CD4-positive, alpha-beta memory T cell (primary cell): ENCODE measurements at regions of chr6 and their contacts with region 1.

Region 1: GRCh38 chr6:27871924-27872638 is 40.1 kb downstream of the OR2B2 start:
- DNase-seq: peak; percentile 91 to 96 (median 94)
- H3K4me3 ChIP-seq: peak overlapping the region; percentile 77 to 89
- H3K4me3 Mint-ChIP-seq: peak overlapping the region; percentile 87 to 94 (median 90)
- H3K27ac ChIP-seq: peak overlapping the region; percentile 86
- H3K27ac Mint-ChIP-seq: peak overlapping the region; percentile 89 to 97 (median 94)
- H3K4me1 ChIP-seq: peaks cover 33% of the 10 kb centered on the region
- H3K4me1 Mint-ChIP-seq: peaks cover 24 to 48% (median 33%) of the 10 kb centered on the region in 4 donors
- H3K27me3 ChIP-seq: no peaks in the 10 kb centered on the region
- H3K27me3 Mint-ChIP-seq: no peaks in the 10 kb centered on the region

Region 2: GRCh38 chr6:26020329-26021000 is 1851.6 kb before region 1 on chr6:
- CTCF ChIA-PET with region 1: no interaction called
- POLR2A ChIA-PET with region 1: interaction called, 45 read pairs
- intact Hi-C with region 1: loop called (anchors 2 kb)
- DNase-seq: peak; percentile 85 to 92 (median 91)
- H3K4me3 ChIP-seq: peak overlapping the region; percentile 82 to 87
- H3K4me3 Mint-ChIP-seq: peak overlapping the region; percentile 92 to 98 (median 96)
- H3K27ac ChIP-seq: peak overlapping the region; percentile 96
- H3K27ac Mint-ChIP-seq: peak overlapping the region; percentile 96 to 100 (median 100)
- H3K4me1 ChIP-seq: peaks cover 29% of the 10 kb centered on the region
- H3K4me1 Mint-ChIP-seq: peaks cover 14 to 58% (median 32%) of the 10 kb centered on the region in 4 donors
- H3K27me3 ChIP-seq: no peaks in the 10 kb centered on the region
- H3K27me3 Mint-ChIP-seq: peaks cover 0 to 1% of the 10 kb centered on the region in 2 donors

Region 3: DNA sequence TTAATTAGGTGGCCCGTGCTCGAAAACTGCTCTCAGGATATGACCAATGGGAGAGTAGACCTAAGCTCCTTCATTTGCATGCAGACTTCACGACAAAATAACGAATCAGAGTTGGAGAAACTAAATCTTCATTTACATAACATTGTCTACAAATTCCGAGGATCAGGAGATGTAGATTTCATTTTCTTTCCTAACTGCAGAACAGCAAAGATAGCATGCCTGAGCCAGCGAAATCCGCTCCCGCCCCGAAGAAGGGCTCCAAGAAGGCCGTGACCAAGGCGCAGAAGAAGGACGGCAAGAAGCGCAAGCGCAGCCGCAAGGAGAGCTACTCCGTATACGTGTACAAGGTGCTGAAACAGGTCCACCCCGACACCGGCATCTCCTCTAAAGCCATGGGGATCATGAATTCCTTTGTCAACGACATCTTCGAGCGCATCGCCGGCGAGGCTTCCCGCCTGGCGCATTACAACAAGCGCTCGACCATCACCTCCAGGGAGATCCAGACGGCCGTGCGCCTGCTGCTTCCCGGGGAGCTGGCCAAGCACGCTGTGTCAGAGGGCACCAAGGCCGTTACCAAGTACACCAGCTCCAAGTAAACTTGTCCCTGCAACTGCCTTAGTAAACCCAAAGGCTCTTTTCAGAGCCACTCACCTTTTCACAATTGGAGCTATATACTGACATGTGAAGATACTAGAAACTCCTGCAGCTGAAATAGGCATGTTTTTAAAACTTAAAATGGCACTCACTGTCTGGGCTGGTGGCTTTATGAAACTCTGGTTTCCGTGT is 1688.3 kb before region 1 on chr6:
- CTCF ChIA-PET with region 1: no interaction called
- POLR2A ChIA-PET with region 1: interaction called, 10 read pairs
- intact Hi-C with region 1: no loop called
- DNase-seq: peak; percentile 72 to 81 (median 79)
- H3K4me3 ChIP-seq: peak overlapping the region; percentile 2 to 69
- H3K4me3 Mint-ChIP-seq: peak overlapping the region; percentile 90 to 100 (median 96)
- H3K27ac ChIP-seq: peak overlapping the region; percentile 67
- H3K27ac Mint-ChIP-seq: peak overlapping the region; percentile 78 to 99 (median 95)
- H3K4me1 ChIP-seq: peaks cover 45% of the 10 kb centered on the region
- H3K4me1 Mint-ChIP-seq: peaks cover 29 to 54% (median 37%) of the 10 kb centered on the region in 4 donors
- H3K27me3 ChIP-seq: no peaks in the 10 kb centered on the region
- H3K27me3 Mint-ChIP-seq: no peaks in the 10 kb centered on the region

Region 4: GRCh38 chr6:27138837-27139755 is 733.0 kb before region 1 on chr6:
- CTCF ChIA-PET with region 1: no interaction called
- POLR2A ChIA-PET with region 1: interaction called, 84 read pairs
- intact Hi-C with region 1: no loop called
- DNase-seq: peak; percentile 64 to 79 (median 69)
- H3K4me3 ChIP-seq: peak overlapping the region; percentile 58 to 73
- H3K4me3 Mint-ChIP-seq: peak overlapping the region; percentile 93 to 98 (median 96)
- H3K27ac ChIP-seq: peak overlapping the region; percentile 94
- H3K27ac Mint-ChIP-seq: peak overlapping the region; percentile 98 to 99 (median 99)
- H3K4me1 ChIP-seq: peaks cover 45% of the 10 kb centered on the region
- H3K4me1 Mint-ChIP-seq: peaks cover 30 to 66% (median 40%) of the 10 kb centered on the region in 4 donors
- H3K27me3 ChIP-seq: no peaks in the 10 kb centered on the region
- H3K27me3 Mint-ChIP-seq: no peaks in the 10 kb centered on the region

Region 5: DNA sequence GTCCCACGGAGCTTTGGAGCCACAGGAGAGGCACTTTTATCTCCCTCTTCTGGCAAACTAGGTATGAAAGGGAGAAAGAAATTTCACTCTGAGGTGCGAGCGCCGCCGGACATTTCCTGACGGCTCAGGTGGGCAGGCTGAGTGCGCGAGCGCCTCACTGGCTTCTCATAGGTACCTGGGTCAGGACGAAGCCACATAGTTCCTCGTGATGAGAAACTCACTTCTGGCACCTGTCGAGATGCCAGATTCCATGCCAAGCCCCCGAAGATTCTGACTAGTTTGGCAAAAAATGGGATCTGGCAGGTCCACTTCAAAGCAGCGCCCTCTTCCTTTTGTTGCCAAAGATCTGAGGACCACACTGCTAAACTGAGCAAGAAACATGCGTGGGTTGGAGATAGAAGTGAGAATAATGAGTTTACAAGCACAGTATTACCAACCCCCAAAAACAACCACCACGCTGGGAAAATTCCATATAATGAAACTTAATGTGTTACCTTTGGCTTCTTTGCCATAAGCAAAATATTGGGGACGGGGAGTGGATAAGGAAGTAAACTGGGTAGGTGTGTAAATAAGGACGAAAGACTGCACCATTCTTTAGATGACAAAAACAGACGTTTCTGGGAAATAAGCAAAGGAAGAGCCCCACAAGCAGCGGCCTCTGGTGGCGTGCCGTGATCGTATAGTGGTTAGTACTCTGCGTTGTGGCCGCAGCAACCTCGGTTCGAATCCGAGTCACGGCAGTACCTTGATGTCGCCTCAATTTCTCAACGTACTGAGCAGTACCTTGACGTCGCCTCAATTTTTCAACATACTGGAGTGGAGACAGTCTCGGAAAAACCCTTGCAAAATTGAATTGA is 714.4 kb before region 1 on chr6:
- CTCF ChIA-PET with region 1: no interaction called
- POLR2A ChIA-PET with region 1: interaction called, 11 read pairs
- intact Hi-C with region 1: no loop called
- DNase-seq: peak; percentile 78 to 92 (median 82)
- H3K4me3 ChIP-seq: peak overlapping the region; percentile 18 to 44
- H3K4me3 Mint-ChIP-seq: peak overlapping the region; percentile 81 to 91 (median 84)
- H3K27ac ChIP-seq: no peak overlapping the region
- H3K27ac Mint-ChIP-seq: peak overlapping the region; percentile 68 to 95 (median 85)
- H3K4me1 ChIP-seq: peaks cover 30% of the 10 kb centered on the region
- H3K4me1 Mint-ChIP-seq: peaks cover 21 to 46% (median 38%) of the 10 kb centered on the region in 4 donors
- H3K27me3 ChIP-seq: no peaks in the 10 kb centered on the region
- H3K27me3 Mint-ChIP-seq: peaks cover 0 to 4% of the 10 kb centered on the region in 2 donors

Region 6: GRCh38 chr6:27518881-27519795 is 352.9 kb before region 1 on chr6:
- CTCF ChIA-PET with region 1: no interaction called
- POLR2A ChIA-PET with region 1: no interaction called
- intact Hi-C with region 1: no loop called
- DNase-seq: peak; percentile 63 to 72 (median 68)
- H3K4me3 ChIP-seq: peak overlapping the region; percentile 66 to 76
- H3K4me3 Mint-ChIP-seq: peak overlapping the region; percentile 87 to 93 (median 89)
- H3K27ac ChIP-seq: peak overlapping the region; percentile 64
- H3K27ac Mint-ChIP-seq: peak overlapping the region; percentile 51 to 91 (median 88)
- H3K4me1 ChIP-seq: peaks cover 9% of the 10 kb centered on the region
- H3K4me1 Mint-ChIP-seq: peaks cover 12 to 31% (median 18%) of the 10 kb centered on the region in 4 donors
- H3K27me3 ChIP-seq: no peaks in the 10 kb centered on the region
- H3K27me3 Mint-ChIP-seq: peaks cover 9 to 20% of the 10 kb centered on the region in 2 donors

Region 7: DNA sequence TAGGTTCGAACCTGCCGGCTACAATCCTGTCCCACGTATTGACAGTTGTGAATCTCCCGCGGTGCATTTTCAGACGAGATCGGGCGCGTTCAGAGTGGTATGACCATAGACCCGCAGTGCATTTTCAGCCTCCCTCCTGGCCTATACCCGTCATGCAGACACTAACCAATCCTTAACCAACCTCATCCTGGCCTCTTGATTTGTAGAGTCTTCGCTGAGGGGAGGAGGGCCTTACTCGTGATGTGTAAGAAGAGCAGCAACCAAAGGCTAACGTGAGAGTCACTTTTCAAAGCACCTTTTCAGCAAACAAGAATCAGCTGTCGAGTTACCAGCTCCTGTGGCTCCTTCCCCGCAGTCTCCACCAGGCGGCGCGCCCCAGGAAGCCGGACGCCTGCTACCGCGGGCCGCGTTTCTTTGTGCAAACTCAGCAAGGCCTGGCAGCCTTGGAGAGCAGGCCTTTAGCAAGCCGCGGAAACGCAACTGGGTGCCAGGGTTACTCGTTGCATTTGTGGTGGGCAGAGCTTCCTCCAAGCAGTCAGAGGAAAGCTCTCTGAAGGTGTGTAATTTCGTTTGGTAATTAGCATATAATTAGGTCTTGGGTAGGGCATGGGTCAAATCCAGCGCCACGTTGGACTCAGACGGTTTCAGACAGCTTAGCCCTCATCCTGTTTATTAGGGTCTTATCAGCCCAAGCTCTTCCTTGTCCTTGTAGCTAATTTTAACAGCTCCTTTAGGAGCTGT is 99.7 kb before region 1 on chr6:
- CTCF ChIA-PET with region 1: interaction called, 14 read pairs
- POLR2A ChIA-PET with region 1: interaction called, 11 read pairs
- intact Hi-C with region 1: no loop called
- DNase-seq: peak; percentile 82 to 85 (median 84)
- H3K4me3 ChIP-seq: no peak overlapping the region
- H3K4me3 Mint-ChIP-seq: peak overlapping the region in 5 of 8 donors; percentile 0 to 60 (median 51)
- H3K27ac ChIP-seq: no peak overlapping the region
- H3K27ac Mint-ChIP-seq: peak overlapping the region in 5 of 7 donors; percentile 4 to 80 (median 15)
- H3K4me1 ChIP-seq: peaks cover 11% of the 10 kb centered on the region
- H3K4me1 Mint-ChIP-seq: peaks cover 3 to 17% (median 9%) of the 10 kb centered on the region in 4 donors
- H3K27me3 ChIP-seq: peaks cover 5% of the 10 kb centered on the region
- H3K27me3 Mint-ChIP-seq: peaks cover 7 to 26% of the 10 kb centered on the region in 2 donors

Region 8: DNA sequence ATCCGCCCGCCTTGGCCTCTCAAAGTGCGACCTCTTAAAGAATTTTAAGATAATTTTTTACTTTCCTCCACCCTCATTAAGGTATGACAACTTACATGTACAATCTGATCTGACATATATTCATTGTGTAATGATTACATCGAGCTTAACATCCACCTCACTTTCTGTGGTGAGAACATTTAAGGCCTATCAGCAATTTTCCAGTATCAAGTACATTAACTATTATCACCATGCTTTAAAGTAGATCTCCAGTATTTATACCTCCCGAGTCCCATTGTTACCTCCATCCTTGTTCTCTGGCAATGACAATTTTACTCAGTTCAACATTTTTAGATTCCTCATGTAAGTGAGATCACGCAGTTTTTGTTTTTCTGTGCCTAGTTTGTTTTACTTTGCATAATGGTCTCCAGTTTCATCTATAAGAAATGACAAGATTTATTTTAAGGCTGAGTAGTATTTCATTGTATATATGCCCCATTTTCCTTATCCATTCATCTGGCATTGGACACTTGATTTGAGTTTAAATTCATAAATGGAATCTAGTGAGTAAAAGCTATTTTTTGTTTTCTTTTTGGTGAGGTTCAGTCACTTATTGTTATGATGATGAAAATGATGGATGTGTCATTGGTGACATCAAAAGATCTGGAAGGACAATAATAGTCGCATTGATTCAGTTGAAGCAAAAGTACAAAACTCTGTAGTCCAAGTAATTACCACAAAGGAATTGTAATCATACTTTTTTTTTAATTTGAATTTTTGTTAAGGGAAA is 46.9 kb before region 1 on chr6:
- CTCF ChIA-PET with region 1: interaction called, 30 read pairs
- POLR2A ChIA-PET with region 1: interaction called, 1,261 read pairs
- intact Hi-C with region 1: loop called (anchors 1 kb)
- DNase-seq: no peak
- H3K4me3 ChIP-seq: peak overlapping the region; percentile 62 to 79
- H3K4me3 Mint-ChIP-seq: peak overlapping the region; percentile 88 to 98 (median 92)
- H3K27ac ChIP-seq: peak overlapping the region; percentile 66
- H3K27ac Mint-ChIP-seq: peak overlapping the region; percentile 91 to 100 (median 98)
- H3K4me1 ChIP-seq: peaks cover 29% of the 10 kb centered on the region
- H3K4me1 Mint-ChIP-seq: peaks cover 16 to 43% (median 31%) of the 10 kb centered on the region in 4 donors
- H3K27me3 ChIP-seq: no peaks in the 10 kb centered on the region
- H3K27me3 Mint-ChIP-seq: no peaks in the 10 kb centered on the region